Activated CD8-positive, alpha-beta T cell treated with anti-CD3 and anti-CD28 coated beads, Interleukin-2, amount 10 ng/mL, durations not matched to agents 7 days and 5 days (primary cell): ENCODE measurements at regions of chr15 and their contacts with region 1.

Region 1: DNA sequence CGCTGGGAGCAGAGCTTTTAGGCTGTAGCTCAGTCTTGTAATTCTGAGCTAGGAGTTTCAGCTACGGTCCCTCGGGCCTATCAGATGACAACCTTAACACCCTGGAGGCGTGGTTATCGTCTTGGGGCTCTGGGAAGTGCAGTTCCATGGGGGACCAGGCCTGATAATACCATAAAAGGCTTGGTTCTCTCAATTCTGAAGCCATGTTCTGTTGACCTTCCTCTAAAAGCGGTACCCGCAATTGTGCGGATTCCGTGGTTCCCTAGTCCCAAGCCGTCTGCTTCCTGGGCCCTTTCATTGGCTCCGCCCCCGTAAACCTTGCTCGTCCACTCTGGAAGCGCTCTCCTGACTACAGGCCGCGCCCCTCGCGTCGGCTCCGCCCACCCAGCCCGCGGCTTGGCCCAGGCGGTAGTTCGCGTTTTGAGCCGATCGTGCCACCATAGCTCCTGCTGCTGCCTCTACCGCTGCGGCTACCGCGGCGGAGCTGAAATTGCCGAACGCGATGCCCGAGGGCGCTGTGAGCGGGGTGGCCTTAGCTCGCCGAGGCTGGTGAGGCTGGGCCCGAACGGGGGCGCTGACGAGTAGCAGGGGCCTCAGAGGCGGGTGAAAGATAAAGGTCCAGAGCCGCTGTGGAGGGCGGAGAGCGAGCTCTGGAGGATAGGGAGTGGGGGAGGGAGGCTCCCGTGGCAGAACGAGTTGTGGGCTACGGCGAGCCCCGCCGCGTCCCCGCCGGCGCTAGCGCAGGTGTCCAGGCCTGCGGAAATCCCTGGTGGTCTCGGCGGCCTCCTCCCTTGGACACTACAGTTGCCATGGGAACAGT is at the start of gene MAPKBP1:
- DNase-seq: peak; percentile 99
- ATAC-seq: peak; percentile 92
- H3K4me3 Mint-ChIP-seq: peak within 1 kb of the TSS; percentile 93
- H3K27ac Mint-ChIP-seq: peak within 1 kb of the TSS; percentile 94
- H3K4me1 Mint-ChIP-seq: peaks cover 55% of the 10 kb centered on the region
- H3K27me3 Mint-ChIP-seq: no peaks in the 10 kb centered on the region
- total RNA-seq, gene MAPKBP1: 30.4 to 30.9 TPM

Region 2: GRCh38 chr15:41603941-41604911 is 170.0 kb before region 1 on chr15:
- CTCF ChIA-PET with region 1: interaction called, 10 read pairs
- POLR2A ChIA-PET with region 1: no interaction called
- DNase-seq: peak; percentile 66
- ATAC-seq: peak; percentile 88
- H3K4me3 Mint-ChIP-seq: peak overlapping the region; percentile 32
- H3K27ac Mint-ChIP-seq: no peak overlapping the region
- H3K4me1 Mint-ChIP-seq: peaks cover 9% of the 10 kb centered on the region
- H3K27me3 Mint-ChIP-seq: peaks cover 25% of the 10 kb centered on the region

Region 3: DNA sequence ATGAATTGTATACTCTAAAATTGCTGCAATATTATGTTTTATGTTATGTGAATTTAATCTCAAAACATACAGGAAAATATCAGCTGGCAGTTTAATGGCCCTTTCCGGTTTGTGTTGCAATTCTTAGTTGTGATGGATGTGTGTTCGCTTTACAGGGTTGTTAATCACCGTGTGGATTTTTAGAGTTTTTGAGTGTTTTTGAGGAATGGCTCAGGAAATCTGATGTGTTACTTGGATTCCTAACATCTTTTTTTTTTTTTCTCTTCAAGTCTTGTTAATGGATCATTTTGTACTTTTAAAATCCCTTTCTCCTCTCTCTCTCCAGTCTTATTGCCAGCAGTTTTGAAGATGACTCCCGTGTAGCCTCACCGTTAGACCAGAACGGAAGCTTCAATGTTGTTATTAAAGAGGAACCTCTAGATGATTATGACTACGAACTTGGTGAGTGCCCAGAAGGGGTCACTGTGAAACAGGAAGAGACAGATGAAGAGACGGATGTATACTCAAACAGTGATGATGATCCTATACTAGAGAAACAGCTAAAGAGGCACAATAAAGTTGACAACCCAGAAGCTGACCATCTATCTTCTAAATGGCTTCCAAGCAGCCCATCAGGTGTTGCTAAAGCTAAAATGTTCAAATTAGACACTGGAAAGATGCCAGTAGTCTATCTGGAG is 78.4 kb before region 1 on chr15:
- CTCF ChIA-PET with region 1: interaction called, 34 read pairs
- POLR2A ChIA-PET with region 1: interaction called, 3 read pairs
- DNase-seq: peak; percentile 75
- ATAC-seq: peak; percentile 98
- H3K4me3 Mint-ChIP-seq: peak overlapping the region; percentile 4
- H3K27ac Mint-ChIP-seq: peak overlapping the region; percentile 74
- H3K4me1 Mint-ChIP-seq: peaks cover 38% of the 10 kb centered on the region
- H3K27me3 Mint-ChIP-seq: no peaks in the 10 kb centered on the region

Region 4: GRCh38 chr15:41806291-41807181 is 32.3 kb after region 1 on chr15:
- CTCF ChIA-PET with region 1: interaction called, 333 read pairs
- POLR2A ChIA-PET with region 1: interaction called, 31 read pairs
- DNase-seq: no peak
- ATAC-seq: no peak
- H3K4me3 Mint-ChIP-seq: no peak overlapping the region
- H3K27ac Mint-ChIP-seq: no peak overlapping the region
- H3K4me1 Mint-ChIP-seq: peaks cover 42% of the 10 kb centered on the region
- H3K27me3 Mint-ChIP-seq: no peaks in the 10 kb centered on the region

Region 5: GRCh38 chr15:41827880-41828806 is 53.9 kb after region 1 on chr15 and contains the start of gene JMJD7:
- CTCF ChIA-PET with region 1: interaction called, 36 read pairs
- POLR2A ChIA-PET with region 1: interaction called, 3 read pairs
- DNase-seq: peak; percentile 96
- ATAC-seq: peak; percentile 87
- H3K4me3 Mint-ChIP-seq: peak within 1 kb of the TSS; percentile 86
- H3K27ac Mint-ChIP-seq: peak within 1 kb of the TSS; percentile 87
- H3K4me1 Mint-ChIP-seq: peaks cover 50% of the 10 kb centered on the region
- H3K27me3 Mint-ChIP-seq: no peaks in the 10 kb centered on the region
- total RNA-seq, gene JMJD7: 19.5 to 22.8 TPM

Region 6: DNA sequence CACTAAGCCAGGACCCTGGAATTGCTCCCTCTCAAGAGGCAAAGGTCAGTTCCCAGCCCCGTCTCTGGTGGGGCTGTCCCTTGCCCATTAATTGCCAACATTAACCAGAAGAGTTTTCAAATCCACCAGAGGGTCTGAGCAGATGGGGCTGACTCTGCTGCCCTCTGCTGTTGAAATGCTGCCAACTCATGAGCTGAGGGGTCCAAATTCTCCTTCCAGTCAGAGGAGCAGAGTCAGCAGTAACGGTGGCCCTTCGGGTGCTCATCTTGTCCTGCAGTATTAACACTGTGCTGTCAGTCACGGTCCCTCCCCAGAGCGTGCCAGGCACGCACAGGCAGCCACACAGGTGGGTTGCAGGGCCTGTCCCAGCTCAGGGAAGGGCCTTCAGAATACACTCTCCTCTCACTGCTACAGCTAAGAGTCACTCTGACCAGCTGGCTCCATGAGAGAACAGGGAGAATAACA is 130.3 kb after region 1 on chr15:
- CTCF ChIA-PET with region 1: interaction called, 157 read pairs
- POLR2A ChIA-PET with region 1: interaction called, 3 read pairs
- DNase-seq: peak; percentile 81
- ATAC-seq: peak; percentile 81
- H3K4me3 Mint-ChIP-seq: no peak overlapping the region
- H3K27ac Mint-ChIP-seq: peak overlapping the region; percentile 26
- H3K4me1 Mint-ChIP-seq: peaks cover 22% of the 10 kb centered on the region
- H3K27me3 Mint-ChIP-seq: no peaks in the 10 kb centered on the region

Region 7: GRCh38 chr15:42084460-42085235 is 310.4 kb after region 1 on chr15:
- CTCF ChIA-PET with region 1: interaction called, 10 read pairs
- POLR2A ChIA-PET with region 1: no interaction called
- DNase-seq: peak; percentile 54
- ATAC-seq: peak; percentile 76
- H3K4me3 Mint-ChIP-seq: no peak overlapping the region
- H3K27ac Mint-ChIP-seq: no peak overlapping the region
- H3K4me1 Mint-ChIP-seq: peaks cover 12% of the 10 kb centered on the region
- H3K27me3 Mint-ChIP-seq: no peaks in the 10 kb centered on the region